Panc1 (cell line): ENCODE measurements at regions of chr18 and their contacts with region 1.

Region 1: GRCh38 chr18:24176727-24177416 is 38.0 kb downstream of the CABYR start:
- DNase-seq: no peak
- ATAC-seq: peak; percentile 69; the same call in 1 of the 2 replicates
- H3K4me3 ChIP-seq: no peak overlapping the region
- H3K27ac ChIP-seq: no peak overlapping the region
- H3K4me1 ChIP-seq: no peaks in the 10 kb centered on the region
- H3K27me3 ChIP-seq: no peaks in the 10 kb centered on the region
- CTCF ChIP-seq: peak; percentile 90

Region 2: GRCh38 chr18:24271381-24272331 is 94.8 kb after region 1 on chr18:
- CTCF ChIA-PET with region 1: no interaction called
- POLR2A ChIA-PET with region 1: no interaction called
- in situ Hi-C with region 1: no loop called
- intact Hi-C with region 1: loop called (anchors 5 kb)
- DNase-seq: no peak
- ATAC-seq: peak; percentile 95
- H3K4me3 ChIP-seq: peak overlapping the region; percentile 77 to 92
- H3K27ac ChIP-seq: peak overlapping the region; percentile 92
- H3K4me1 ChIP-seq: peaks cover 20% of the 10 kb centered on the region
- H3K27me3 ChIP-seq: no peaks in the 10 kb centered on the region
- CTCF ChIP-seq: peak; percentile 52

Region 3: DNA sequence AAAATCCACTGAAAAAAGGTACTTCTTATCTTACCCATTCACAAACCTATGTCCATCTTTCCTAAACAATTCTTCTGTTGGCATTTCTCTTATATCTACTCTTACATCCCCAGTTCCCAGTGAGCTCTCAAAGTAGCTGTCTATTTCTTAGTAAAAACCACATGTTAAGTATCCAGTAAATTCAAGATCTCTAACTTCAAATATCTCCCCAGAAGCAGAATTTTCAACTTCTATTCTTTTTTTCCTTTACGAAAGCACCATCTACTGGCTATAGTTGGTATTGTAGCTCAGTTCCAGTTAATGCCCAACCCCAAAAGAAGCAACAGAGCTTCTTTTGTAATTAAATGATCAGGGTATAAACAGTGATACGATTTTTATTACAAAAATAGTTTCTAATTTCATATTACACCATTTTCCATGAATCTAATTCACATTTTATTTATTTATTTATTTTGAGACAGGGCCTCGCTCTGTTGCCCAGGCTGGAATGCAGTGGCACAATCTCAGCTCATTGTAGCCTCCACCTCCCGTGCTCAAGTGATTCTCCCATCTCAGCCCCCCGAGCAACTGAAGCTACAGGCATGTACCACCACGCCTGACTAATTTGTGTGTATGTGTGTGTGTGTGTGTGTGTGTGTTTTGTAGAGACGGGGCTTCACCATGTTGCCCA is 312.1 kb after region 1 on chr18:
- CTCF ChIA-PET with region 1: interaction called, 11 read pairs
- POLR2A ChIA-PET with region 1: no interaction called
- in situ Hi-C with region 1: no loop called
- intact Hi-C with region 1: no loop called
- DNase-seq: peak; percentile 22
- ATAC-seq: peak; percentile 47; the same call in 1 of the 2 replicates
- H3K4me3 ChIP-seq: no peak overlapping the region
- H3K27ac ChIP-seq: no peak overlapping the region
- H3K4me1 ChIP-seq: no peaks in the 10 kb centered on the region
- H3K27me3 ChIP-seq: peaks cover 5% of the 10 kb centered on the region; the same call in 1 of the 2 replicates
- CTCF ChIP-seq: peak; percentile 82